Lower leg skin (tissue), 4 donors: ENCODE measurements at regions of chr16 and their contacts with region 1.

Region 1: GRCh38 chr16:13571036-13571435 is 348.9 kb upstream of the ERCC4 start:
- DNase-seq: no peak
- H3K4me3 ChIP-seq: no peak overlapping the region
- CTCF ChIP-seq: no peak
- POLR2A ChIP-seq: no peak

Region 2: DNA sequence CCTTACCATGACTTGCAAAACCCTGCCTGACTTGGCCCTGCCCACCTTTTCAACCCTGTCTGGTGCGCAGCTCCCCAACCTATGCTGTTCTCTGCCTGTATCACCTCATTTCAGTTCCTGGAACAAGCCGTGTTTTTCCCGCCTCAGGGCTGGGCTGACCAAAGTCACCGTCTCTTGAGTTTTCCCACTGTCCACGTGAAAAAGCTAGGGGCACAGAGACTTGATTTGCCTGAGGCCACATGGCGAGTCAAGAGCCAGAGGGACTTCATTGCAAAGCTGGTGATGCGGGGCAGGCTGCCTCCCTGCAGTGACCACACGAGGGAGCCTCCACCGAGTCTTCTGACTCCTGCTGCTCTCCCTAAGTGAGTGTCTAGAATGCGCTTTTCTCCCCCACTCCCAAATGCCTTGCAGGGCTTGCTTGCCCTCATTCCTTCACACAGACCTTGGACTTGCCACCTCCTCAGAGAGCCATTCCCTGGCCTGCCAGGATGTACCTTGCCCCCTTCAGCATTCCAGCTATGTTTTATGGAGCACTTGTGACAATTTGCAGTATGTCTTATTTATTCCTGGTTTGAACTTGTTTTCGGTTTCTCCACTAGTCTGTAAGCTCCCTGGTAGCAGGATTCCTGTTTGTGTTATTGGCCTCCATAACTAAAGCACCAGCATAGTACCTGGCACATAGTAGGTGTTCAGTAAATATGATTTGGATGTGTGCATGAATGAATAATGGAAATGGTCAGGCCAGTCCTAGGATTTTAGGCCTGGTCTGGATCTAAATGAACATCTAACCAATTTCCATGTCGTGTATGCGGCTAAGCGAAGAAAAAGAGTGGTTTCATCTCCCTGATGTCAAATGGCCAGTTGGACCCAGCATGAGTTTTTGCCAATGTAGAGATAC is 1342.2 kb before region 1 on chr16:
- intact Hi-C with region 1: loop called (anchors 10 kb)
- DNase-seq: peak; percentile 21 to 89
- H3K4me3 ChIP-seq: no peak overlapping the region
- CTCF ChIP-seq: no peak
- POLR2A ChIP-seq: no peak

Region 3: DNA sequence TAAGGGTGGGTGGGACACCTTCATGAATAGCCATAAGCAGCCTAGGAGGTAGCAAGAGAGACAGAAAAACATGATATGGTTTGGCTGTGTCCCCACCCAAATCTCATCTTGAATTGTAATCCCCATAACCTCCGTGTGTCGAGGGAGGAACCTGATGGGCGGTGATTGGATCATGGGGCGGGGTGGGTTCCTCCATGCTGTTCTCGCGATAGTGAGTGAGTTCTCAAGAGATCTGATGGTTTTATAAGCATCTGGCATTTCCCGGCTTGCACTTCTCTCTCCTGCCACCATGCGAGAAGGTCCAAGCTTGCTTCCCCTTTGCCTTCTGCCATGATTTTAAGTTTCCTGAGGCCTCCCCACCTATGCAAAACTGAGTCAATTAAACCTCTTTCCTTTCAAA is 89.8 kb after region 1 on chr16:
- intact Hi-C with region 1: loop called (anchors 5 kb)
- DNase-seq: no peak
- H3K4me3 ChIP-seq: no peak overlapping the region
- CTCF ChIP-seq: no peak
- POLR2A ChIP-seq: no peak

Region 4: GRCh38 chr16:14097182-14097959 is 526.3 kb after region 1 on chr16:
- intact Hi-C with region 1: no loop called
- DNase-seq: peak in 1 of 2 donors; percentile 32
- H3K4me3 ChIP-seq: no peak overlapping the region
- CTCF ChIP-seq: no peak
- POLR2A ChIP-seq: no peak